Activated CD4-positive, alpha-beta T cell treated with anti-CD3 and anti-CD28 coated beads, Interleukin-2, amount 10 ng/mL, durations not matched to agents 24 days and 14 days (primary cell): ENCODE measurements at regions of chr18 and their contacts with region 1.

Region 1: GRCh38 chr18:59846814-59847490 is 52.8 kb upstream of the PMAIP1 start:
- DNase-seq: peak; percentile 85
- H3K4me3 Mint-ChIP-seq: peak overlapping the region; percentile 26
- H3K27ac Mint-ChIP-seq: peak overlapping the region; percentile 91
- H3K4me1 Mint-ChIP-seq: peaks cover 21% of the 10 kb centered on the region
- H3K27me3 Mint-ChIP-seq: no peaks in the 10 kb centered on the region

Region 2: GRCh38 chr18:59143441-59143840 is 703.5 kb before region 1 on chr18:
- intact Hi-C with region 1: no loop called
- DNase-seq: no peak
- H3K4me3 Mint-ChIP-seq: peak overlapping the region; percentile 61
- H3K27ac Mint-ChIP-seq: peak overlapping the region; percentile 78
- H3K4me1 Mint-ChIP-seq: peaks cover 61% of the 10 kb centered on the region
- H3K27me3 Mint-ChIP-seq: no peaks in the 10 kb centered on the region

Region 3: GRCh38 chr18:59833785-59834184 is 13.2 kb before region 1 on chr18:
- intact Hi-C with region 1: no loop called
- DNase-seq: no peak
- H3K4me3 Mint-ChIP-seq: no peak overlapping the region
- H3K27ac Mint-ChIP-seq: no peak overlapping the region
- H3K4me1 Mint-ChIP-seq: peaks cover 6% of the 10 kb centered on the region
- H3K27me3 Mint-ChIP-seq: peaks cover 28% of the 10 kb centered on the region

Region 4: DNA sequence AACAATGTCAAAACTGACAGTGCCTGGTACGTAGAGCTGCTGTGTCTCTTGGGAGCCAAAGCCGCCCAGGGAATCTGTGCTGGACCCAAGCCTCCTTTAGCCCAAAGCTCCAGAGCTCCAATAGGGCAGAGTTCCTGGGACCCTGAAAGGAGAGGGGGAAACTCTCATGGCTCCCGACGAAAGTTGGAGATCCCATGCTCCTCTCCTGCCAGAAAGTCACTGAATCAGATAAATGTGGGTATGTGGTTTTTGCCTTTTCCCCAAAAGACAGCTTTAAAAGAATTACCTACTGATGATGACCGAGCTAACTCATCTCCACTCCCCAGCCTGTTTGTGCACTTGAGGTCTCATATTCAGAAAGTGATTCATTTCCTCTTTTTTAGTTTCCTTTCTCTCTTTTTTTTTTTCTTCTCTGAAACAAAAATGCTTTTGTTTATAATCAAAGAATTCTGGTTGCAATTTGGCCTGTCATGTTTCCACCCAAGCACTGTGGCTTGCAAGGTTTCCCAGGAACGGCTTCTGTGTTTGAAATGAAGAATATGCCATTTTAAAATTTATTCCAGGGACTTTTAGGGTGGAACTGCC is 38.7 kb after region 1 on chr18:
- intact Hi-C with region 1: loop called (anchors 1 kb)
- DNase-seq: peak; percentile 80
- H3K4me3 Mint-ChIP-seq: peak overlapping the region; percentile 61
- H3K27ac Mint-ChIP-seq: peak overlapping the region; percentile 67
- H3K4me1 Mint-ChIP-seq: peaks cover 51% of the 10 kb centered on the region
- H3K27me3 Mint-ChIP-seq: no peaks in the 10 kb centered on the region

Region 5: GRCh38 chr18:59907172-59907571 is 60.2 kb after region 1 on chr18:
- intact Hi-C with region 1: loop called (anchors 2 kb)
- DNase-seq: peak; percentile 70
- H3K4me3 Mint-ChIP-seq: peak overlapping the region; percentile 65
- H3K27ac Mint-ChIP-seq: peak overlapping the region; percentile 76
- H3K4me1 Mint-ChIP-seq: peaks cover 66% of the 10 kb centered on the region
- H3K27me3 Mint-ChIP-seq: no peaks in the 10 kb centered on the region